HCT116 (cell line): ENCODE measurements at regions of chr7 and their contacts with region 1.

Region 1: DNA sequence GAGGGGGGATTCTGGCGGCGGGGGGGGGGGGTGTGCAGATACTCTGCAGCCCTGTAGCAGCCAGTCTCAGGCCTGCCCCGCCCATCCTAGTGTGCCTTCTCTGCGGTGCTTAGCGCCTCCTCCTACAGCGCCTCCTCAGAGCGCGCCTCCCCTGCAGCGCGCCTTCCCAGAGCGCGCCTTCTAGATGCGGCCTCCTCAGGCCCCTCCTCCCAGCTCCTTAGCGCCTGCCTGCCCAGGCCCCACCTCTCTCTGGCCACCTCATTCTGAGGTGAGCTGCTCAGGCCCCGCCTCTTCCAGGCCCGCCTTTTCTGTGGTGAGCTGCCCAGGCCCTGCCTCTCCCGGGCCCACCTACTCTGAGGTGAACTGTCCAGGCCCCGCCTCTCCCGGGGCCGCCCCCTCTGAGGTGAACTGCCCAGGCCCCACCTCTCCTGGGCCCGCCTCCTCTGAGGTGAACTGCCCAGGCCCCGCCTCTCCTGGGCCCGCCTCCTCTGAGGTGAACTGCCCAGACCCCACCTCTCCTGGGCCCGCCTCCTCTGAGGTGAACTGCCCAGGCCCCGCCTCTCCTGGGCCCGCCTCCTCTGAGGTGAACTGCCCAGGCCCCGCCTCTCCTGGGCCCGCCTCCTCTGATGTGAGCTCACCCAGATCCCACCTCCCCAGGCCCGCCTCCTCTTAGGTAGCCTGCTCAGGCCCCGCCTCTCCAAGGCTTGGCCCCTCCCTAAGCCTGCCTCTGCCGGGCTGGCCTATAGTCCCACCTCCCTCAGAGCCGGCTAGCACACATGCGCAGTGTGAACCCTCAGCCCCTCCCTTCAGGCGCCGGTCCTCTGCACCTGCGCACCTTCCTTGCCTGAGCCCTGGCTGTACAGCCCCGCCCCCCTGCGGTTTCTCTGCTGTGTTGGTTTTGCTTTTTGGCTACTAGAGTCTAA is 2.1 kb upstream of the SGCE start:
- DNase-seq: peak; percentile 92
- ATAC-seq: peak; percentile 88
- H3K4me3 ChIP-seq: peak overlapping the region; percentile 46 to 56
- H3K27ac ChIP-seq: no peak overlapping the region
- H3K4me1 ChIP-seq: peaks cover 5 to 21% of the 10 kb centered on the region in 2 experiments; a peak in 2 of 4 replicates
- H3K27me3 ChIP-seq: no peaks in the 10 kb centered on the region
- CTCF ChIP-seq: no peak
- POLR2A ChIP-seq: no peak
- RAD21 ChIP-seq: no peak

Region 2: GRCh38 chr7:94509879-94510581 is 148.0 kb before region 1 on chr7:
- CTCF ChIA-PET with region 1: no interaction called
- POLR2A ChIA-PET with region 1: no interaction called
- RAD21 ChIA-PET with region 1: interaction called in 1 of 2 experiments, 4 read pairs
- intact Hi-C with region 1: loop called (anchors 5 kb)
- DNase-seq: no peak
- ATAC-seq: peak; percentile 80
- H3K4me3 ChIP-seq: peak overlapping the region; percentile 53 to 62
- H3K27ac ChIP-seq: peak overlapping the region; percentile 86
- H3K4me1 ChIP-seq: peaks cover 3 to 9% of the 10 kb centered on the region in 2 experiments; a peak in 2 of 4 replicates
- H3K27me3 ChIP-seq: no peaks in the 10 kb centered on the region
- CTCF ChIP-seq: no peak
- POLR2A ChIP-seq: peak; percentile 37
- RAD21 ChIP-seq: no peak

Region 3: DNA sequence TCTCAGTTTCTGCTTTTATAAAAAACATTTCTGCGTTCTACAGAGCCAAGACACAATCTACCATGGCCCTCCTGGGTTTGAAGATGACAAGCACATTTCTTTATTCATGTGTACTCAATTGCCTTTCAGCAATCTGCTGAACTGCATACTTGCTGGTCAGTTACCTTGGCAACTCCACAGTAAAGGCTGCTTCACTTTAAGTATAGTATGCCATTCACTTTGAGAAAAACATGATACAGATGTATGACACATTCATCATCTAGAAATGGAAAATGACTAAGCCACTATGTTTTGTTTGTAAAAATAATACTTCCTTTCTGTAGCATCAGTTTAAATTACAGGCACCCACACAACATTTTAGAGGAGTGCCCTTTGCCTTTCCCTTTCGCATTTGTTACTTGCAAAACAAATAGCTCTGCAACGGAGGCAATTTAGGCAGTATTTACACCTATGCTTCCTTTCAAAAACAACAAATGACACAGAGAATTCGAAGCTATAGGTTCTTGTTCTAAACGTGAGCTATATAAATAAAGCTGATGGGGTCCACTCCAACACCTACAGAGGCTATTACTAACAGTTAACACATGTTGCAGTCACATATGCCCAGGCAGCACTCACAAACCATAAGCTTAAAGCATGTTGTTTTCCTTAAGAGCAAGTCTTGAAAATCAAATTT is 25.6 kb before region 1 on chr7:
- CTCF ChIA-PET with region 1: no interaction called
- POLR2A ChIA-PET with region 1: no interaction called
- RAD21 ChIA-PET with region 1: no interaction called
- intact Hi-C with region 1: no loop called
- DNase-seq: no peak
- ATAC-seq: no peak
- H3K4me3 ChIP-seq: no peak overlapping the region
- H3K27ac ChIP-seq: no peak overlapping the region
- H3K4me1 ChIP-seq: no peaks in the 10 kb centered on the region
- H3K27me3 ChIP-seq: no peaks in the 10 kb centered on the region
- CTCF ChIP-seq: no peak
- POLR2A ChIP-seq: no peak
- RAD21 ChIP-seq: no peak

Region 4: DNA sequence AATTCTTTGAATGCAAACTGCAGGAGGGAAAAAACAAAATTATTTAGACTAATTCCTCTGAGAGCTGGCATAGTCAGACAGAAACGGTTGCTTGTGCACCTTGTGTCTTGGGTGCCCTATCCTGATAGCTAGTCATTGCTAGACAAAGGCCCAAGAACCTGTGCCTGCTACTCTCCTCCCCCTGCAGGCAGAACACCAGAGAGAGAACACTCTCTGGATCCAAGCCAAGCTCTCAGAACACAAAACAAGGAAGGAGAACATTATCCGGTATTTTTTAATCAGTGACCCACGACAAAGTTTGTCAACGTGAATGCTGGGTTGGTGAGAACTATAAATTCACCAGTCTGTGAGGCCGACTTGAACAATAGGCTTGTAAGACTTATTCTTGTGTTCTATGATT is 230.5 kb after region 1 on chr7:
- CTCF ChIA-PET with region 1: no interaction called
- POLR2A ChIA-PET with region 1: no interaction called
- RAD21 ChIA-PET with region 1: no interaction called
- intact Hi-C with region 1: no loop called
- DNase-seq: peak; percentile 34
- ATAC-seq: peak; percentile 83
- H3K4me3 ChIP-seq: no peak overlapping the region
- H3K27ac ChIP-seq: no peak overlapping the region
- H3K4me1 ChIP-seq: peaks cover 0 to 8% of the 10 kb centered on the region in 2 experiments; a peak in 3 of 4 replicates
- H3K27me3 ChIP-seq: no peaks in the 10 kb centered on the region
- CTCF ChIP-seq: peak; percentile 9 to 55 (median 33); a peak in 4 of 6 replicates
- POLR2A ChIP-seq: no peak
- RAD21 ChIP-seq: peak; percentile 43

Region 5: GRCh38 chr7:94908323-94909178 is 250.5 kb after region 1 on chr7:
- CTCF ChIA-PET with region 1: no interaction called
- POLR2A ChIA-PET with region 1: no interaction called
- RAD21 ChIA-PET with region 1: no interaction called
- intact Hi-C with region 1: loop called (anchors 2 kb)
- DNase-seq: peak; percentile 16
- ATAC-seq: peak; percentile 72
- H3K4me3 ChIP-seq: peak overlapping the region; percentile 58 to 65
- H3K27ac ChIP-seq: peak overlapping the region; percentile 81; the same call in 1 of the 2 replicates
- H3K4me1 ChIP-seq: peaks cover 3 to 18% of the 10 kb centered on the region in 2 experiments; a peak in 3 of 4 replicates
- H3K27me3 ChIP-seq: no peaks in the 10 kb centered on the region
- CTCF ChIP-seq: no peak
- POLR2A ChIP-seq: no peak
- RAD21 ChIP-seq: no peak

Region 6: GRCh38 chr7:95476904-95477594 is 819.0 kb after region 1 on chr7:
- CTCF ChIA-PET with region 1: no interaction called
- POLR2A ChIA-PET with region 1: no interaction called
- RAD21 ChIA-PET with region 1: no interaction called
- intact Hi-C with region 1: loop called (anchors 10 kb)
- DNase-seq: peak; percentile 62
- ATAC-seq: peak; percentile 72
- H3K4me3 ChIP-seq: no peak overlapping the region
- H3K27ac ChIP-seq: no peak overlapping the region
- H3K4me1 ChIP-seq: peaks cover 0 to 6% of the 10 kb centered on the region in 2 experiments; a peak in 1 of 4 replicates
- H3K27me3 ChIP-seq: no peaks in the 10 kb centered on the region
- CTCF ChIP-seq: peak; percentile 58 to 80 (median 62); a peak in 5 of 6 replicates
- POLR2A ChIP-seq: no peak
- RAD21 ChIP-seq: peak; percentile 82